Right cardiac atrium (tissue), 5 donors: ENCODE measurements at regions of chr7 and their contacts with region 1.

Region 1: DNA sequence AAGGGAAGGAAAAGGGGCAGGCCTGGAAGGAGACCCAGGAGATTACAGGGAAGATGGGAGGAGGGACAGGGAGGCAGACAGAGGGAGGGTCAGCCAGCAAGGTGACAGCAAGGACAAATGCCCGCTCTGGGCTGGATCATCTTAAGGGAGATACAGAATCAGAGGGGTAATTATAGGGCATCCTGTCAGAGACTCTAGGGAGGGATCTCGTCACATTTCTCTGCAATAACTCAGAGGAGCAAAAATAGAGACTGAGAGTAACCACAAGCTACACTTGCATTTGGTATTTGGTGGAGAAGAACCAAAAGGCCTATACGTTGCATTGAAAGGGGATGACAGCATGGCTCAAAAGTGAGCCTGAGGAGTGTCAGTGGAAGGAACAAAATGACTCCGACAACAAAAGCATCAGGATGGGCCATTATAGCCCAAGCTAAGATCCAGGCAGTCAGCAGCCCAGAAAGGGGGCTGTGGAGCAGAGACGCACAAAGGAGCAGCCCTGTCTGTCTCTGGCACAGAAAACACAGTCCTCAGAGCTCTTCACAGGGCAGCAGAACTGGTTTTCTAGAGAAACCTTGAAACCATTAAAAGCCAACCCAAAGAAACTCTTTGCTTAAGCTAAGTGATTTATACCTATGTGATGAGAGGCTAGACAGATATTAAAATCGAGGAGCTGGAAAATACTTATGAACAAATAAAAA is 430.2 kb upstream of the VSTM2A start:
- DNase-seq: no peak
- ATAC-seq: no peak
- H3K4me3 ChIP-seq: no peak overlapping the region
- H3K27ac ChIP-seq: no peak overlapping the region
- H3K4me1 ChIP-seq: no peaks in the 10 kb centered on the region
- H3K27me3 ChIP-seq: no peaks in the 10 kb centered on the region

Region 2: GRCh38 chr7:54060643-54061042 is 51.3 kb before region 1 on chr7:
- intact Hi-C with region 1: loop called in 1 of 4 experiments (anchors 5 kb)
- DNase-seq: no peak
- ATAC-seq: no peak
- H3K4me3 ChIP-seq: no peak overlapping the region
- H3K27ac ChIP-seq: no peak overlapping the region
- H3K4me1 ChIP-seq: no peaks in the 10 kb centered on the region
- H3K27me3 ChIP-seq: no peaks in the 10 kb centered on the region